CD4-positive, alpha-beta T cell (primary cell): ENCODE measurements at regions of chr17 and their contacts with region 1.

Region 1: GRCh38 chr17:38868817-38869525 is 887 bp upstream of the LASP1 start:
- DNase-seq: peak; percentile 81 to 92 (median 86)
- ATAC-seq: peak; percentile 57
- H3K4me3 ChIP-seq: peak overlapping the region; percentile 97
- H3K4me3 Mint-ChIP-seq: peak overlapping the region; percentile 98
- H3K27ac ChIP-seq: peak overlapping the region; percentile 53 to 86
- H3K27ac Mint-ChIP-seq: peak overlapping the region; percentile 95
- H3K4me1 ChIP-seq: peaks cover 52% of the 10 kb centered on the region
- H3K4me1 Mint-ChIP-seq: peaks cover 52% of the 10 kb centered on the region
- H3K27me3 ChIP-seq: no peaks in the 10 kb centered on the region
- H3K27me3 Mint-ChIP-seq: peaks cover 13% of the 10 kb centered on the region
- CTCF ChIP-seq: no peak

Region 2: DNA sequence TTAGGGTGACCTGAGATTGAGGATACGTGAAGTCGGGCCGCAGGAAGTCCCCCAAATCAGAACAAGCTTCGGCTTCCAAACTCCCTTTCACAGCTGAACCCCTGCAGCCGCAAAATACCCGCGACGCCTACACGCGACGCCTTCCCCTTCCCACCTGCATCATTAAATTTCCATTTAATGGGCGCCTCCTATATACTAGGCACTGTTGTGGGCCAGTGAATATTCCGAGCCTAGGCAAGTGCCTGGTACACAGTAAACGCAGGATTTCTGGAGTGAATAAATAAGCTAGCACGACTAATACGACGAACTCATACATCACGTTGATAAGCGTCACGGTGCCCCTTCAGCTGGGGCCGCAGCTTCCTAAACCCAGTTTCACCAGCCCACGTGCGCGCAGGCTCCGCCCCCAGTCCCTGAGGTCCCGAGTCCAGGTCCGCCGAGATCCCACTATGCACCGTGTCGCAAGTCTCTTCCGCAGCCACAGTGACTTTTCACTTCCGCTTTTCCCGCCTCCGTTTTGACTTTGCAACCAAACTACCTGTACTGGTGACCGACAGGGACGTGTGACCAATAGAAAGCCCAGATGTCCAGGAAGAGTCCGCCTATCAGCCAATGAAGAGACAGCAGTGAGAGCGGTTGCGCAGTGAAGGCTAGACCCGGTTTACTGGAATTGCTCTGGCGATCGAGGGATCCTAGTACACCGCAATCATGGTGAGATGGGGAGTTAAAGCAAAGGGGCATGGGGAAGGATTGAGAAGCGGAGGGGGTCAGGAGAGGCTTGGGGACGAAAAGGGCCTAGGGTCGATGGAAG is 116.6 kb before region 1 on chr17 and contains the start of gene PSMB3:
- CTCF ChIA-PET with region 1: no interaction called
- POLR2A ChIA-PET with region 1: interaction called, 13 read pairs
- intact Hi-C with region 1: no loop called
- DNase-seq: peak; percentile 86 to 100 (median 93)
- ATAC-seq: peak; percentile 85
- H3K4me3 ChIP-seq: peak within 1 kb of the TSS; percentile 90
- H3K4me3 Mint-ChIP-seq: peak within 1 kb of the TSS; percentile 99
- H3K27ac ChIP-seq: peak within 1 kb of the TSS; percentile 80 to 93
- H3K27ac Mint-ChIP-seq: peak within 1 kb of the TSS; percentile 83
- H3K4me1 ChIP-seq: peaks cover 69% of the 10 kb centered on the region
- H3K4me1 Mint-ChIP-seq: peaks cover 38% of the 10 kb centered on the region
- H3K27me3 ChIP-seq: peaks cover 31 to 33% of the 10 kb centered on the region in 2 experiments
- H3K27me3 Mint-ChIP-seq: peaks cover 27% of the 10 kb centered on the region
- CTCF ChIP-seq: no peak
- total RNA-seq, gene PSMB3: 46.6 to 55.0 TPM

Region 3: DNA sequence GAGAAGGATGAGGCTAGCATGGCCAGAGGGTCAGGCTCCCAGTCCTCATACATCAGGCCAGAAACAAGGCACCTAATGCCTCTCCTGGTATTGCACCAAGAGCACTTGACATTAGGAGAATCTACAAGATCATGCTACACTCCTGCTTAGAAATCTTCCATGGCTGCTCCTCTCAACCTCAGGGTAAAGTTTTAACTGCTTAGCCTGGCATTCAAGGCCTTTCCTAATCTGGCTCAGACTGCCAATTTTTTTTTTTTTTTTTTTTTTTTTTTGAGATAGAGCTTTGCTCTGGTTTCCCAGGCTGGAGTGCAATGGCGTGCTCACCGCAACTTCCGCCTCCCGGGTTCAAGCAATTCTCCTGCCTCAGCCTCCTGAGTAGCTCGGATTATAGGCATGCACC is 77.8 kb before region 1 on chr17:
- CTCF ChIA-PET with region 1: no interaction called
- POLR2A ChIA-PET with region 1: no interaction called
- intact Hi-C with region 1: no loop called
- DNase-seq: no peak
- ATAC-seq: no peak
- H3K4me3 ChIP-seq: no peak overlapping the region
- H3K4me3 Mint-ChIP-seq: no peak overlapping the region
- H3K27ac ChIP-seq: no peak overlapping the region
- H3K27ac Mint-ChIP-seq: no peak overlapping the region
- H3K4me1 ChIP-seq: peaks cover 3% of the 10 kb centered on the region
- H3K4me1 Mint-ChIP-seq: peaks cover 20% of the 10 kb centered on the region
- H3K27me3 ChIP-seq: no peaks in the 10 kb centered on the region
- H3K27me3 Mint-ChIP-seq: no peaks in the 10 kb centered on the region
- CTCF ChIP-seq: no peak

Region 4: GRCh38 chr17:38879878-38880682 is 11.1 kb after region 1 on chr17:
- CTCF ChIA-PET with region 1: interaction called, 8 read pairs
- POLR2A ChIA-PET with region 1: interaction called, 103 read pairs
- intact Hi-C with region 1: no loop called
- DNase-seq: peak in 3 of 14 experiments; percentile 29 to 56 (median 51)
- ATAC-seq: peak; percentile 24
- H3K4me3 ChIP-seq: peak overlapping the region; percentile 28
- H3K4me3 Mint-ChIP-seq: peak overlapping the region; percentile 79
- H3K27ac ChIP-seq: peak overlapping the region; percentile 42 to 44
- H3K27ac Mint-ChIP-seq: peak overlapping the region; percentile 89
- H3K4me1 ChIP-seq: peaks cover 93% of the 10 kb centered on the region
- H3K4me1 Mint-ChIP-seq: peaks cover 87% of the 10 kb centered on the region
- H3K27me3 ChIP-seq: no peaks in the 10 kb centered on the region
- H3K27me3 Mint-ChIP-seq: no peaks in the 10 kb centered on the region
- CTCF ChIP-seq: no peak

Region 5: GRCh38 chr17:38912221-38912813 is 43.3 kb after region 1 on chr17:
- CTCF ChIA-PET with region 1: no interaction called
- POLR2A ChIA-PET with region 1: interaction called, 3 read pairs
- intact Hi-C with region 1: loop called in 1 of 2 experiments (anchors 5 kb)
- DNase-seq: peak in 2 of 14 experiments; percentile 8 to 21
- ATAC-seq: no peak
- H3K4me3 ChIP-seq: no peak overlapping the region
- H3K4me3 Mint-ChIP-seq: no peak overlapping the region
- H3K27ac ChIP-seq: no peak overlapping the region
- H3K27ac Mint-ChIP-seq: peak overlapping the region; percentile 36
- H3K4me1 ChIP-seq: peaks cover 47% of the 10 kb centered on the region
- H3K4me1 Mint-ChIP-seq: peaks cover 10% of the 10 kb centered on the region
- H3K27me3 ChIP-seq: no peaks in the 10 kb centered on the region
- H3K27me3 Mint-ChIP-seq: no peaks in the 10 kb centered on the region
- CTCF ChIP-seq: no peak

Region 6: DNA sequence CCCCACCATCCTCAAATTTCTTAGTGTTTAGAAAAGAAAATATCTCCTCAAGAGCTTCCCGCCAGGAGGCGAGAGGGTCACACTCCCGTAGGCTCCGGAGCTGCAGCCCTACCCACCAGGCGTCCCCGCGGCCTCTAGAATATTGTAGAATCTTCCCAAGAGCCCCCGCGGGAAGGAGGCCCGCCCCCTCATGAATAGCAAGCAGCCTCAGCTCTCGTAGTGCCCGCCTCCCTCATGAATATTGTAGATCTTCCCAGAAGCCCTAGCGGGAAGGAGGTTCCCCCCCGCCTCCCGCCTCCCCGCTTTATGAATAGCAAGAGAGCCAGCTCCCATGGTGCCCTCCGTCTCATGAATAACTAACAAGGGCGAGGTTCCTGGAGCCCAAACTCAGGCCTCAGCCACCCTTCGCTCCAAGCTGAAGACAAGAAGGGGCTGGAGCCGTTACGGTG is 98.3 kb after region 1 on chr17 and contains the start of gene FBXO47:
- CTCF ChIA-PET with region 1: interaction called, 3 read pairs
- POLR2A ChIA-PET with region 1: interaction called, 8 read pairs
- intact Hi-C with region 1: loop called (anchors 5 kb)
- DNase-seq: peak; percentile 66 to 92 (median 76)
- ATAC-seq: peak; percentile 98
- H3K4me3 ChIP-seq: peak within 1 kb of the TSS; percentile 34
- H3K4me3 Mint-ChIP-seq: peak within 1 kb of the TSS; percentile 83
- H3K27ac ChIP-seq: peak within 1 kb of the TSS; percentile 1 to 45
- H3K27ac Mint-ChIP-seq: peak within 1 kb of the TSS; percentile 61
- H3K4me1 ChIP-seq: peaks cover 16% of the 10 kb centered on the region
- H3K4me1 Mint-ChIP-seq: peaks cover 14% of the 10 kb centered on the region
- H3K27me3 ChIP-seq: no peaks in the 10 kb centered on the region
- H3K27me3 Mint-ChIP-seq: no peaks in the 10 kb centered on the region
- CTCF ChIP-seq: no peak
- total RNA-seq, gene FBXO47: not detected

Region 7: GRCh38 chr17:39099663-39100286 is 230.8 kb after region 1 on chr17:
- CTCF ChIA-PET with region 1: no interaction called
- POLR2A ChIA-PET with region 1: interaction called, 4 read pairs
- intact Hi-C with region 1: loop called in 1 of 2 experiments (anchors 10 kb)
- DNase-seq: no peak
- ATAC-seq: no peak
- H3K4me3 ChIP-seq: no peak overlapping the region
- H3K4me3 Mint-ChIP-seq: no peak overlapping the region
- H3K27ac ChIP-seq: no peak overlapping the region
- H3K27ac Mint-ChIP-seq: peak overlapping the region; percentile 83
- H3K4me1 ChIP-seq: peaks cover 65% of the 10 kb centered on the region
- H3K4me1 Mint-ChIP-seq: peaks cover 77% of the 10 kb centered on the region
- H3K27me3 ChIP-seq: no peaks in the 10 kb centered on the region
- H3K27me3 Mint-ChIP-seq: no peaks in the 10 kb centered on the region
- CTCF ChIP-seq: no peak